Mammary epithelial cell (primary cell): ENCODE measurements at regions of chr12 and their contacts with region 1.

Region 1: DNA sequence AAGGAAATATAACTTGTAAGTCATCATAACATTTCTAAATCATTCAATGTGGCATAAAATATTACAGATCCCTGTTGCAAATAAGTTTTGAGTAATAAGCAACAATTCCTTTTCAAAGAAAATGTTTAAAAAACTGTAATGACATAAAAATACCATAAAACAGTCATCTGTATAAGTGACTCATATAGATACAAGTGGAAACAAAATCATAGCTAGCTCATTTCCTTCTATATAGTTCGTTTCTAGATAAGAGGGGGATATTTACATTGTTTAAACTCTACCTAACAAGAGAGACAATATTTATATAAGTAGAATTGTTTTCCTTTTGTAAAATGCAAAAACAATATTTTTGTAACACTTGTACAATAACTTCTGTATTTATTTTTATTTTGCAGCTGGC is 148.9 kb downstream of the GRIP1 start:
- DNase-seq: no peak
- H3K4me3 ChIP-seq: no peak overlapping the region
- H3K27ac ChIP-seq: no peak overlapping the region
- H3K4me1 ChIP-seq: no peaks in the 10 kb centered on the region
- H3K27me3 ChIP-seq: no peaks in the 10 kb centered on the region
- CTCF ChIP-seq: no peak

Region 2: GRCh38 chr12:66279123-66279712 is 250.7 kb before region 1 on chr12:
- CTCF ChIA-PET with region 1: no interaction called
- dilution Hi-C with region 1: no loop called
- in situ Hi-C with region 1: no loop called
- intact Hi-C with region 1: no loop called
- DNase-seq: no peak
- H3K4me3 ChIP-seq: no peak overlapping the region
- H3K27ac ChIP-seq: no peak overlapping the region
- H3K4me1 ChIP-seq: peaks cover 5% of the 10 kb centered on the region
- H3K27me3 ChIP-seq: no peaks in the 10 kb centered on the region
- CTCF ChIP-seq: peak; percentile 87 to 90

Region 3: GRCh38 chr12:66508025-66508424 is 21.9 kb before region 1 on chr12:
- CTCF ChIA-PET with region 1: interaction called, 10 read pairs
- dilution Hi-C with region 1: no loop called
- in situ Hi-C with region 1: no loop called
- intact Hi-C with region 1: no loop called
- DNase-seq: peak; percentile 30
- H3K4me3 ChIP-seq: no peak overlapping the region
- H3K27ac ChIP-seq: no peak overlapping the region
- H3K4me1 ChIP-seq: peaks cover 5% of the 10 kb centered on the region
- H3K27me3 ChIP-seq: no peaks in the 10 kb centered on the region
- CTCF ChIP-seq: no peak